ENCODE measurements at regions of chr6 and their contacts with region 1.

Region 1: GRCh38 chr6:111764238-111765175 is 108.7 kb downstream of the FYN start:
- DNase-seq: peak; percentile 41
- H3K4me3 Mint-ChIP-seq: peak overlapping the region; percentile 74
- H3K27ac Mint-ChIP-seq: peak overlapping the region; percentile 90
- H3K4me1 Mint-ChIP-seq: peaks cover 100% of the 10 kb centered on the region
- H3K27me3 Mint-ChIP-seq: no peaks in the 10 kb centered on the region

Region 2: GRCh38 chr6:111406200-111406721 is 358.2 kb before region 1 on chr6:
- intact Hi-C with region 1: no loop called
- DNase-seq: no peak
- H3K4me3 Mint-ChIP-seq: no peak overlapping the region
- H3K27ac Mint-ChIP-seq: peak overlapping the region; percentile 45
- H3K4me1 Mint-ChIP-seq: peaks cover 30% of the 10 kb centered on the region
- H3K27me3 Mint-ChIP-seq: no peaks in the 10 kb centered on the region

Region 3: GRCh38 chr6:111580826-111581505 is 183.5 kb before region 1 on chr6:
- intact Hi-C with region 1: no loop called
- DNase-seq: no peak
- H3K4me3 Mint-ChIP-seq: no peak overlapping the region
- H3K27ac Mint-ChIP-seq: peak overlapping the region; percentile 16
- H3K4me1 Mint-ChIP-seq: peaks cover 19% of the 10 kb centered on the region
- H3K27me3 Mint-ChIP-seq: no peaks in the 10 kb centered on the region

Region 4: DNA sequence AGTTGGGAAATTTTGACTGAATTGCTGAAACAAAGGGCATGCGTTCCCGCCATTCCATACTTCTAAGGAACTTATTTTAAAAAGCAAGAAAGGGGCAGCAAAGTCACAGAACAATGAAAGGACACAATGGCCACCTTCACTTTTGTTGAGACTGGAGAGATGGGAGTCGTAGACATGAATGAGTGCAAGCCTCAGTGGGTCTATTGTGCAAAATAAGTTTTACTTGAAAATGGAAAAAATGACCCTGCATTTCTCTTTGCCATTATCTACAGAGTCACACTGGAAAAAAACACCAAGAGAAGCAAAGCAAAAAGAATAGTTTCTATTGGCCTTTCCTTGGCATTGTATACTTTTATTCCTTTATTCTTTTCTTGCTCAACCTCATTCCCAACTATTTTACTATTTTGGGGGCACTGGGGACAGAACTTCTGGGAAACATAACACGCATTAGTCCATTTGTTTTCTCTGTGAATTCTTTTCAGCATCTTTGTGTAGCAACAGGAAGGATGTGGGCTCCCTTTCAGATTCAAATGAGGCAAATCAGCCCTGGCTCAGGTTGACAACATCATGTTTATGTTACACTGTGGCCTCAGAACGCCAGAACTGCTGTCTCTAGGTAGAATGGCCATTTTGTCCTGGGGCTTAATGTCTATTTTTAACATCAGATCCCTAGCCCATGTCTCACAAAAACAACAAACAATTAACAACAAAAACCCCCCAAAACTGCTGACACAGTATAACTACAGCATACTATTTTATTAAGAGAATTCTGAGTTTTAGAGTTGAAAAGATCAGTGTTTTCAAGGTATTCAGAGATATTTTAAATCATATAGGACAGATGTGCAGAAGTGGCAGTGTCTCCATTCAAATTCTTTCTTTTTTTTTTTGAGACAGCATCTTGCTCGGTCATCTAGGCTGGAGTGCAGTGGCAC is 13.5 kb before region 1 on chr6:
- intact Hi-C with region 1: loop called (anchors 1 kb)
- DNase-seq: peak; percentile 66
- H3K4me3 Mint-ChIP-seq: peak overlapping the region; percentile 70
- H3K27ac Mint-ChIP-seq: peak overlapping the region; percentile 97
- H3K4me1 Mint-ChIP-seq: peaks cover 95% of the 10 kb centered on the region
- H3K27me3 Mint-ChIP-seq: no peaks in the 10 kb centered on the region

Region 5: DNA sequence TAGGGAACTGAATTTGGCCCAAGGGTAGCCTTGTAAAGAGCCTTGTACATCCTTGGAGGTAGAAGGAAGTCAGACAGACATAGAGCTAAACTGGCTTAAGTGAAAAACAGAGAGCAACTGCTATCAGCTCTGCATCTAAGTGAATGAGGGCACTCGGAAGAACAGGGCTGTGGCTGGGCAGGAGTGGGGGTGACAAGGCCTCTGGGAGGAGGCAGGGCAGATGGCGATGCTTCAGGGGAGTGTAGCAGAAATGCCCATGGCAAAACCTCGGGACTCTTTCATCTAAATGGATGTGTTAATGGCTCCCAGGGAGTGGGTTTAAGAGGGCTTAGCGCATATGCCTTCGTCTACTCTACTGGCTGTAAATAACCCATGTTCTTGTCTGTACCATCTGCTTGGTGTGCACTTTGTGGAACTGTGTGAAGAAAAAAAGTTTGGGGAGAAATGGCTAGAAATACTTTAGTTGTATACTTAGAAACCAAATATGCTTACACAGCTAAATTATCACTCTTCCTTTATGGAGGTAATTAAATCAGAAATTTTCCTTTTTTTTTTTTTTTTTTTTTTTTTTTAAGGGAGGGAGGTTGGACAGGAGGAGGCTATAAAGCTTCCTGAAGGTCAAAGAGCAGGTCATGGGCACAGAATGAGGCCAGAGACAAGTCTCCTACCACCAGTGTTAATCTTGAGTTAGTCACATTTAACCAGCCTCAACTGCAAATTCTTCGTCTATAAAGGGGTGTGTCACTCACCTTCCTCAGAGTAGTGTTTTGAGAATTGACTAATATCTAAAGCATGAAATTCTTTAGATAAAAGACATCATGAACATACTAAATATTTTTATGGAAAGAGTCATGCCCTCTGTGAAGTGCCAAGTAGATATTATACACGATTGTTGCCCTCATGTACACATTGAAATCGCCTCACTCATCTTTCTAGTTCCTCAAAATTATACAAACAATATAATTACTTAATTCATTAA is 47.8 kb after region 1 on chr6:
- intact Hi-C with region 1: no loop called
- DNase-seq: no peak
- H3K4me3 Mint-ChIP-seq: peak overlapping the region; percentile 32
- H3K27ac Mint-ChIP-seq: peak overlapping the region; percentile 95
- H3K4me1 Mint-ChIP-seq: peaks cover 74% of the 10 kb centered on the region
- H3K27me3 Mint-ChIP-seq: no peaks in the 10 kb centered on the region

Region 6: GRCh38 chr6:111823831-111824607 is 59.5 kb after region 1 on chr6:
- intact Hi-C with region 1: loop called (anchors 1 kb)
- DNase-seq: no peak
- H3K4me3 Mint-ChIP-seq: peak overlapping the region; percentile 72
- H3K27ac Mint-ChIP-seq: peak overlapping the region; percentile 89
- H3K4me1 Mint-ChIP-seq: peaks cover 81% of the 10 kb centered on the region
- H3K27me3 Mint-ChIP-seq: no peaks in the 10 kb centered on the region

Region 7: GRCh38 chr6:112018619-112019416 is 254.3 kb after region 1 on chr6:
- intact Hi-C with region 1: loop called (anchors 1 kb)
- DNase-seq: no peak
- H3K4me3 Mint-ChIP-seq: no peak overlapping the region
- H3K27ac Mint-ChIP-seq: no peak overlapping the region
- H3K4me1 Mint-ChIP-seq: peaks cover 50% of the 10 kb centered on the region
- H3K27me3 Mint-ChIP-seq: no peaks in the 10 kb centered on the region

Region 8: DNA sequence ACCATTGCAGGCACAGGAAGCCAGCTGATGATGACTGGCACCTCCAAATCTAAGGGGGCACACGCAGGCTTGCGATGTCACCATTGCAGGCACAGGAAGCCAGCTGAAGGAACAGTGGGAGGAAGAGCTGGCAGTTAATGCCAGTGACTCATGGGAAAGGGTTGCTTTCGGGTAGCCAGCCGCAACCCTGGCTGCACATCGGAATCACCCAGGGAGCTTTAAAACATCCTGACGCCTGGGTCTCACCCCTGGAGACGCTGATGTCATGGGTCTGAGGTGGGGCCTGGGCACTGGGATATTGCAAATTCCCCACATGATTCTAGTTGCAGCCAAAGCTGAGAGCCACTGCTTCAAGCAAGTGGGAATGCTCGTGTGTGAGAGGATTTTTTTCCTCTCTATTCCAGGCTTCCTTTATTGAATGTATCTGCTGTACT is 273.3 kb after region 1 on chr6:
- intact Hi-C with region 1: loop called (anchors 1 kb)
- DNase-seq: no peak
- H3K4me3 Mint-ChIP-seq: no peak overlapping the region
- H3K27ac Mint-ChIP-seq: no peak overlapping the region
- H3K4me1 Mint-ChIP-seq: peaks cover 71% of the 10 kb centered on the region
- H3K27me3 Mint-ChIP-seq: no peaks in the 10 kb centered on the region

Region 9: DNA sequence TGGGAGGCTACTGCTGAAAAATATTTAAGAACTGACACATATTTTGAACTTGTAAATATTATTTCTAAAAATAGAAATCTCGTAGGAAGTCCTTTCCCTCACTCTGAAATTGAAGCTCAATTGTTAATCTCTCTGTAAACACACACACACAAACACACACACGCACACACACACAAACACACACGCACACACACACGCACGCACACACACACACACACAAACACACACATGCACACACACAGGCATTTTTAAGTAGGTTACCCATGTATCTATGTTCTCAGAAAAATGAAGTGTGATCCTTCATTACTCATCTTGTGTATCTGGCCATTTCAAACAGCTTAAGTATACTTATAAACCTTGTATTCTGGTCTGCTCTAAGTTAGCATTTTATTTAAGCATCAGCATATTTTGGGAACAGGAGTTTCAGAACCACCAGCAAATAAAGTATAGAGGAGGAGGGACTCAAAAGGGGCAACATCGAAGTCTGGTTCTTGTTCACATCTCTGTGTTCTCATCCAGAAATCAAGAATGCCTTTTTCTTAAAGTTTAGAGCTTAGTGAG is 301.0 kb after region 1 on chr6:
- intact Hi-C with region 1: no loop called
- DNase-seq: no peak
- H3K4me3 Mint-ChIP-seq: no peak overlapping the region
- H3K27ac Mint-ChIP-seq: no peak overlapping the region
- H3K4me1 Mint-ChIP-seq: no peaks in the 10 kb centered on the region
- H3K27me3 Mint-ChIP-seq: no peaks in the 10 kb centered on the region

Measured in activated T-helper 1 cell treated with anti-CD3 and anti-CD28 coated beads, Interleukin-12 subunit alpha, Interleukin-12 subunit beta, Interleukin-2, Interleukin-4 antibody, amounts not matched to agents 30 ng/mL and 10 ng/mL and 1 ng/mL, durations not matched to agents 14 hours and 24 hours and 36 hours (primary cell).